ENCODE measurements at regions of chr17 and their contacts with region 1.

Region 1: GRCh38 chr17:67689534-67690177 is 28.1 kb upstream of the NOL11 start:
- DNase-seq: peak; percentile 64
- H3K4me3 ChIP-seq: no peak overlapping the region
- H3K27ac ChIP-seq: no peak overlapping the region
- H3K4me1 ChIP-seq: no peaks in the 10 kb centered on the region
- H3K27me3 ChIP-seq: no peaks in the 10 kb centered on the region
- CTCF ChIP-seq: peak; percentile 74

Region 2: GRCh38 chr17:67475236-67475937 is 214.3 kb before region 1 on chr17:
- intact Hi-C with region 1: loop called (anchors 10 kb)
- DNase-seq: peak; percentile 84
- H3K4me3 ChIP-seq: no peak overlapping the region
- H3K27ac ChIP-seq: no peak overlapping the region
- H3K4me1 ChIP-seq: no peaks in the 10 kb centered on the region
- H3K27me3 ChIP-seq: no peaks in the 10 kb centered on the region
- CTCF ChIP-seq: peak; percentile 90

Measured in colonic mucosa (tissue), 4 donors.